ENCODE measurements at regions of chr4 and their contacts with region 1.

Region 1: DNA sequence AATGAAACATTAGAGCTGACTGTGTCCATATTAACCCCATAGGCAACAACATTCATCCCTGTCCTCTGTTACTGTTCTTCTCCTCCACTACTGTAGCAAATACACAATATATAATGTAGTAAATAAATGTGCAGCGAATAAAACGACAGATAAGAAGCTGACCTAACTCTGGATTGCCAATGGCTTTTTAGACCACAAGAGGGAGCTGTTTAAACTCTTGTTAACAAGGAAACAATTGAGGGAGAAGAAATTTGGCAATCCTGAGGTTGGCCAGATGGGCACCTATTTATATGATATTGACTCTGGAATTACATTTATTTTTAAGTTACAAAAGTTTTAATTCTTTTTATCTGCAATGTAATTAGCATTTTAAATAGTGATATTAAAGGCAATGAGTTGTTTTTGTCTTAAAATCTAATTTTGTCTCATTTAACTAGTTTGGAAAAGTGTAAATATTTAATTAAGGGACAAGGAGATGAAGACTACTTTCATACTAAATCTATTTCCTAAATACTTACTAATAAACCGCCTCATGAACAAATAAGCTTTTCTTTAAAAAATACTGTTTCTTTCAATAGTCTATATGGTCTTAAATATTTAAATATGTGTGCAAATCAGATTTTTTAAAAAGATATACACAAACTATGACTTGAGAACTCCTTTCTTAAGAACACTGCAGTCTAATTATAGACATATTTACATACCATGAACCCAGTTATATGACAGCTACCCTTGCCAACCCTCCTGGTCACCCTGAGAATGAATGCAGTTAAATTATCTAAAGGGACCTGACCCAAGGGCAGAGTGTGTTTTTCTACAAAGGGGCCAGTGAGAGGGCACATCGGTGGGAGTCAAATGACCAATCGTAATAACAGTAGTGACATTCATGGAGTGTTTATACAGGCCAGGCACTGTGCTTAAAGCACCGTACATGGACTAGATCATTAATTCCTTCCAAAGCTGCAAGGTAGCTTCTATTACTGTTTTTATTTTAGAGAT is 52.9 kb upstream of the HPF1 start:
- DNase-seq: peak; percentile 69
- ATAC-seq: peak; percentile 74
- H3K4me3 ChIP-seq: no peak overlapping the region
- H3K27ac ChIP-seq: no peak overlapping the region
- H3K4me1 ChIP-seq: no peaks in the 10 kb centered on the region
- H3K27me3 ChIP-seq: no peaks in the 10 kb centered on the region
- CTCF ChIP-seq: peak; percentile 73
- EP300 ChIP-seq: no peak
- POLR2A ChIP-seq: no peak
- RAD21 ChIP-seq: peak; percentile 53

Region 2: DNA sequence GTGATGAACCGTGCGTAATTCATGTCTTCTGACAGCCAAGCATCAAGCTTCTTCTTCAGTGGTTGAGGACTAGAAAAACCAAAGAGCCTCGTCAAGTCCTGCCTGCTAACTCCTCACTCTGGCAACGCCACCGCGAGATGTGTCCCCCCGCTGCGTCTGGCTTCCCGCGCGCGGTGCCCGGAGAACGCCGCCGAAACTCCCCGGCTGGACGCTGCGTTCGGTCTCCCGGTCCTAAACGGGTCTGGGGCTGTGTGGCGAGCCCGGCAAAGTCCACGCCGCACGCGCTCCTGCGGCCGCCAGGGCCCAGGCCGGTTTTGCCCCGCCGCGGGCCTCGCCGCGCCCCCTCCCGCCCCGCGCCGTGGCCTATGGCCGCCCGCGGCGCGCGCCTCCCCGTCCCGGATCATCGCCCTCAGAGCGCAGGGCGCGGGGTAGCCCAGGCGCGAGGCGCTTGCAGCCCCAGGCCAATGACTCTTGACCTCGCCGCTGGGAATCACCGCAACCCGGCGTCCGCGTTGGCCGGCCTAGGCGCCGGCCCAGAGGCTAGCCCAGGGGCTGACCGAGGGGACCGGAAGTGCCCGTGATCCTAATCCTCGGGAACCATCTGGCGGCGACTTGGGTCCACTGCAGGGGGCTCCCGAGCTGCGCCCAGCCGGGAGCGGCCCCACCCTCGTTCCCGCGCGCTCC is 279.2 kb after region 1 on chr4 and contains the start of gene AADAT:
- CTCF ChIA-PET with region 1: interaction called, 14 read pairs
- POLR2A ChIA-PET with region 1: no interaction called
- in situ Hi-C with region 1: no loop called
- intact Hi-C with region 1: loop called (anchors 1 kb)
- DNase-seq: peak; percentile 81
- ATAC-seq: peak; percentile 93
- H3K4me3 ChIP-seq: peak within 1 kb of the TSS; percentile 63 to 81 (median 77)
- H3K27ac ChIP-seq: peak within 1 kb of the TSS; percentile 63
- H3K4me1 ChIP-seq: peaks cover 45% of the 10 kb centered on the region
- H3K27me3 ChIP-seq: no peaks in the 10 kb centered on the region
- CTCF ChIP-seq: peak; percentile 92
- EP300 ChIP-seq: no peak
- POLR2A ChIP-seq: peak in 1 of 2 experiments; percentile 64; a peak in 3 of 4 replicates
- RAD21 ChIP-seq: peak; percentile 95
- total RNA-seq, gene AADAT: 6.1 and 6.8 TPM in 2 replicates